ENCODE measurements at regions of chr7 and their contacts with region 1.

Region 1: DNA sequence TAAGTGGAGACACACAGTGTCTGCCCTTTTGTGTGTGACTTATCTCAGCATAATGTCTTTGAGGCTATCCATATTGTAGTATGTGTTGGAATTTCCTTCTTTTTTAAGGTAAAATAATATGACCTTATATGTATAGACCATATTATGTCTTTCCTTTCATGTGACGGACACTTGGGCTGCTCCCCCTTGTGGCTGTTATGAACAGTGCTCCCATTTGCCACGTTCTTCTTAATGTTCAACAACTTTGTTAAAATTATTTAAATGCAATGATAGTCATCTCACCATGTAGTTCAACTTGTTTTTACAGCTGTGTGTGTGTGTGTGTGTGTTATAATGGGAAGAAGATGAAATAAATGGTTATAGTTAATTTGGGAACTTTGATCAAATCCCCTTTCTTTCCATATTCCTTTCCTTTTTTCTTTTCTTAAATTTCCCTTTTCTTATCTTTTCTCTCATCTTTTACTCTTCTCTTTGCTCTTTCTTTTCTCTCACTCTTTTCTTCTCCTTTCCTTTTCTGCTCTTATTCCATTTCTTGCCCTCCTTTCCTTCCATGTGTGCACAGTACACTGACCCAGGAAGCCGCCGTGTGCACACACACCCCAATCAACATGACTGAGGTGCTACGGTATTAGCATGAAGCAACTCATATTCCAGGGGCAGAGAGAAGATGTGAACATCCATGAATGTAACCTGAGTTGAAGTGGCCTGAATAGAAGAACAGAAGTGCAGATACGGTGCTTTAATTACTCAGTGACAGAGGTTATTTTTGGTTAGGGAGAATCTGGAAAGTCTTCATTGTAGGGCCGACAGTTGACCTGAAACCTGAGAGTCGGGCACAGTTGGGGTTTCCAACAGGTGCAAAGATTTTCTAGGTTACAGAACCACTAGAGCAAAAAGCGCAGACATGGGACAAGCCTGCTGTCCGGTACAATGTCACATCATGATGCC is 596.7 kb downstream of the SDK1 start:
- DNase-seq: no peak
- H3K4me3 ChIP-seq: no peak overlapping the region
- H3K27ac ChIP-seq: no peak overlapping the region
- H3K4me1 ChIP-seq: peaks cover 0 to 14% (median 4%) of the 10 kb centered on the region in 4 donors
- H3K27me3 ChIP-seq: no peaks in the 10 kb centered on the region
- CTCF ChIP-seq: peak; percentile 68 to 82

Region 2: GRCh38 chr7:3300651-3301378 is 596.9 kb before region 1 on chr7 and contains the start of gene SDK1:
- intact Hi-C with region 1: loop called (anchors 5 kb)
- DNase-seq: peak; percentile 90 to 96
- H3K4me3 ChIP-seq: peak within 1 kb of the TSS; percentile 70 to 78
- H3K27ac ChIP-seq: peak within 1 kb of the TSS; percentile 80 to 82
- H3K4me1 ChIP-seq: peaks cover 0 to 35% (median 8%) of the 10 kb centered on the region in 4 donors
- H3K27me3 ChIP-seq: no peaks in the 10 kb centered on the region
- CTCF ChIP-seq: peak; percentile 92 to 99

Region 3: GRCh38 chr7:3592401-3593135 is 305.1 kb before region 1 on chr7:
- intact Hi-C with region 1: no loop called
- DNase-seq: no peak
- H3K4me3 ChIP-seq: no peak overlapping the region
- H3K27ac ChIP-seq: no peak overlapping the region
- H3K4me1 ChIP-seq: peaks cover 0 to 4% (median 0%) of the 10 kb centered on the region in 4 donors
- H3K27me3 ChIP-seq: no peaks in the 10 kb centered on the region
- CTCF ChIP-seq: no peak

Region 4: DNA sequence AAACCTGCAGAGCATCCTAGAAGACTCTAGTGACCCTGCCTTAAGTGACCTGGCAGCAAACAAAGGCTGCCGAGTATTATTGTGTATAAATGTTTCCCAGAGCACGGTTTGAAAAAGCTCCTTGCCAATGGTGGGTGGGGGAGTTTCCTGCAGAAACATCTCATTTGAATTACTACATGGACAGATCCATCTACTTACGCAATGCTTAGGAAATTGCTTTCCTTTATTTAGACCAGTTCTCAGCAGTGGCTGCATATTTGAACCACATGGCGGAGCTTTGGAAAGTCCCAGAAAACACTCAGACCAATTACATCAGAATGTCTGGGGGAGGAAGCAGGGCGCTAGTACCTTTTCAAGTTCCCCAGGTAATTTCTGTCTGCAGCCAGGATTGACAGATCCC is 35.8 kb before region 1 on chr7:
- intact Hi-C with region 1: no loop called
- DNase-seq: peak in 1 of 2 donors; percentile 47
- H3K4me3 ChIP-seq: no peak overlapping the region
- H3K27ac ChIP-seq: peak overlapping the region in 1 of 2 donors; percentile 32
- H3K4me1 ChIP-seq: peaks cover 0 to 34% (median 7%) of the 10 kb centered on the region in 4 donors
- H3K27me3 ChIP-seq: no peaks in the 10 kb centered on the region
- CTCF ChIP-seq: peak; percentile 19 to 26

Region 5: DNA sequence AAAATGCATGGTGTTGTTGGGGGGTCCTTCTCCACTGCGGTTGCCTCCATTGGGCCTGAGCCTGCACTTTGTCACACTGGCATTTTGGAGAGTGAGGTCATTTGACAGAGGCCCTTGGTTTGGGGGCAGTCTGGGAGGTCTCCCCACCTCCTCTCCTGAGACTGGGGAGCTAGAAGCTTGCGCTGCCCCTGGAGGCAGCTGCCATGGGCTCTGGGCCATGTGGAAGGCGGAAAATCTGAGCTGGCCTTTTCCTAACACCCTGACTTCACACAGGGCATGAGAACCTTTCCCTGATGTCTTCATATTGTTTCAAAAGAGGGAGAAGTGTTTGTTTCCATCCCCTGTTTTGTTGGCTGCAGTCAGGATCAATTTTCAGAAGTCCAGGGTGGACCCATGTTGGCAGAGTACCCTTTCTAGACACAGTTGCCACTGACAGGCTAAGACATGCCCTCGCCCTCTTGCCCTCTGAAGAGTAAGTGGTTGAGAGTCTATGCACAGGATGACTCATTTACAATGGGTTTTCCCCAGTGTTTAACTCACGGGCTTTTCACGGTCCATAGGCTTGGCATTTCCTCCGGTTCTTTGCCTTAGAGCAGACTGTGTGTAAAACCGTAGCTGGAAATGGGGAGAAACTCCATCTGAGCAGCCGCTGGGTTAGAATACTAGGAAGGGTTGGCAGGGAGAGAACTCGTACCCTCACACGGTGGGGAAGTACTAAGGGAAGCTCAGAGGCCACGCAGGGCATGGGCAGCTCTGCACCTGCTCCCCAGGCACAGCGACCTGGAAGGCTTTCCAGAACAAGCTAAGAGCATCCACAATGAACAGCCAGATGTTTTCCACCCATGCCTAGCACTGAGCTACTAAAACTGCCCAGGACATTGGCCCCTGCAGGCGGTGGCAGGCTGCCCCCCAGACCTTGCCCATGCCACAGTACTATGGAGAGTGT is 58.3 kb after region 1 on chr7:
- intact Hi-C with region 1: no loop called
- DNase-seq: no peak
- H3K4me3 ChIP-seq: no peak overlapping the region
- H3K27ac ChIP-seq: no peak overlapping the region
- H3K4me1 ChIP-seq: no peaks in the 10 kb centered on the region
- H3K27me3 ChIP-seq: no peaks in the 10 kb centered on the region
- CTCF ChIP-seq: no peak

Measured in tibial artery (tissue), 4 donors.